SK-N-SH (cell line): ENCODE measurements at regions of chr5 and their contacts with region 1.

Region 1: DNA sequence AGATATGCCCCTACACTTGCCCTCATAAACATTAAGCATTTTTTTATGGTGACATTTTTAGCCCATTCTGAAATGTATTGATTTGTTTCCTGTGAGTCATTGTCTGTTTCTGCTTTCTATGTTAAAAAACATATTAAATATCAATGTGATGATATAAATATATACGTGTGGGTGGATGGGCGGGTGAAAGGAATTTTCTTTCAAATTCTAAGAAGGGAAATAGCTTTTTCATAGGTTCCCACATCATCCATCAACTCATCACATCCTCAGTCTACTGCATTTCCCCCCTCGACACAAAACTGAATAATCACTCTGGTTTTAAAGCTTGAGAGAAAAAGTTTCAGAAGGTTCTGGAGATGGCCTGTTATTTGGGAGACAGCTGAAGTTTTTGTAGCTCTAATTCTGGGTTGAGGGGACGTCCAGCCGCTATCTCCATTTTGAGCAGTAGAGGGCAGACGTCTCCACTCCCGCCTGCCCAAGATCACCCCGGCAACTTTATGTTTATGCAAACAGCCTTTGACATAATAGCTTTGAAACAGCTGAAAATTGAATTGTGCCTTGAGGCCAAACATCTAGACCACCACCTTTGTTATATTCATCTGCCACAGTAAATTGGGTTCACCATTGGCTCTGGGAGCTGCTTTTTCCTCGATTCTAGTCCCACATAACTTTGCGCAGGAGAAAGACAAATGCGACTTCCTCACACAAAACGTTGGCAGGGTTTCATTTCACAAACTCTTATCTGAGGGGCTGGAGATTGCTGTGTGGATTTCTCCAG is 216.2 kb upstream of the CLINT1 start:
- DNase-seq: peak; percentile 61
- H3K4me3 ChIP-seq: no peak overlapping the region; a peak in 1 of 4 replicates
- H3K27ac ChIP-seq: peak overlapping the region in 1 of 2 experiments; percentile 55; a peak in 1 of 4 replicates
- H3K4me1 ChIP-seq: peaks cover 0 to 3% of the 10 kb centered on the region in 2 experiments; a peak in 2 of 4 replicates
- H3K27me3 ChIP-seq: peaks cover 2% of the 10 kb centered on the region; the same call in 1 of the 2 replicates
- CTCF ChIP-seq: peak; percentile 89
- EP300 ChIP-seq: peak in 1 of 2 experiments; percentile 43; a peak in 1 of 4 replicates
- RAD21 ChIP-seq: peak; percentile 83

Region 2: DNA sequence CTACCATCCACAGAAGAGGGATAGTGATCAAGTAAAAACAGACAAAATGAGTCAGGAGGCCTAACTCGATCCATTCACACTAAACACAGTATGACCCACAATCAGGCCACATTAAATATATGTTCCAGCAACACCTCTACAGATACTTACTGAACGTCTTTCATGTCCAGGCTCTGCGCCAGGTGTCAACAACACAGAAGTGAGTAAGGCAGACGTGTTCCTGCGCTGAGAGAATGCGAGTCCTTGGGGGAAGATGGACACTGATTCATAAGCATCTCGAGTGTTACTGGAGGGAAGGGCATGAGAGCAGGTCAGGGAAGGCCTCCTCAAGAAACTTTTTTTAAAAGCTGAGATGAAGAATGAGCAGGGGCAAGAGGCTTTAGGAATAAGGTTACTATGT is 51.9 kb before region 1 on chr5:
- CTCF ChIA-PET with region 1: no interaction called
- POLR2A ChIA-PET with region 1: no interaction called
- DNase-seq: no peak
- H3K4me3 ChIP-seq: no peak overlapping the region
- H3K27ac ChIP-seq: no peak overlapping the region
- H3K4me1 ChIP-seq: no peaks in the 10 kb centered on the region
- H3K27me3 ChIP-seq: no peaks in the 10 kb centered on the region
- CTCF ChIP-seq: no peak
- EP300 ChIP-seq: no peak
- RAD21 ChIP-seq: no peak

Region 3: GRCh38 chr5:158054223-158055110 is 20.7 kb before region 1 on chr5:
- CTCF ChIA-PET with region 1: interaction called, 25 read pairs
- POLR2A ChIA-PET with region 1: no interaction called
- DNase-seq: peak; percentile 14
- H3K4me3 ChIP-seq: no peak overlapping the region
- H3K27ac ChIP-seq: peak overlapping the region; percentile 34 to 53; a peak in 3 of 4 replicates
- H3K4me1 ChIP-seq: peaks cover 4 to 12% of the 10 kb centered on the region in 2 experiments; a peak in 2 of 4 replicates
- H3K27me3 ChIP-seq: no peaks in the 10 kb centered on the region
- CTCF ChIP-seq: no peak
- EP300 ChIP-seq: peak; percentile 76 to 85
- RAD21 ChIP-seq: no peak

Region 4: GRCh38 chr5:158064334-158065123 is 10.7 kb before region 1 on chr5:
- CTCF ChIA-PET with region 1: interaction called, 25 read pairs
- POLR2A ChIA-PET with region 1: no interaction called
- DNase-seq: no peak
- H3K4me3 ChIP-seq: no peak overlapping the region
- H3K27ac ChIP-seq: peak overlapping the region in 1 of 2 experiments; percentile 53; a peak in 1 of 4 replicates
- H3K4me1 ChIP-seq: peaks cover 0 to 3% of the 10 kb centered on the region in 2 experiments; a peak in 2 of 4 replicates
- H3K27me3 ChIP-seq: no peaks in the 10 kb centered on the region
- CTCF ChIP-seq: no peak
- EP300 ChIP-seq: no peak
- RAD21 ChIP-seq: no peak

Region 5: GRCh38 chr5:158165638-158166037 is 90.5 kb after region 1 on chr5:
- CTCF ChIA-PET with region 1: interaction called, 28 read pairs
- POLR2A ChIA-PET with region 1: no interaction called
- DNase-seq: no peak
- H3K4me3 ChIP-seq: no peak overlapping the region
- H3K27ac ChIP-seq: no peak overlapping the region
- H3K4me1 ChIP-seq: peaks cover 0 to 17% of the 10 kb centered on the region in 2 experiments; a peak in 2 of 4 replicates
- H3K27me3 ChIP-seq: no peaks in the 10 kb centered on the region
- CTCF ChIP-seq: 0 out of 2 replicates have a peak, but pooled peaks have one; percentile 10
- EP300 ChIP-seq: no peak
- RAD21 ChIP-seq: peak; percentile 20; the same call in 1 of the 2 replicates

Region 6: GRCh38 chr5:159133041-159133741 is 1058.0 kb after region 1 on chr5:
- CTCF ChIA-PET with region 1: interaction called, 10 read pairs
- POLR2A ChIA-PET with region 1: no interaction called
- DNase-seq: peak; percentile 32
- H3K4me3 ChIP-seq: no peak overlapping the region; a peak in 1 of 4 replicates
- H3K27ac ChIP-seq: no peak overlapping the region
- H3K4me1 ChIP-seq: no peaks in the 10 kb centered on the region; a peak in 2 of 4 replicates
- H3K27me3 ChIP-seq: no peaks in the 10 kb centered on the region; the same call in 1 of the 2 replicates
- CTCF ChIP-seq: peak; percentile 84
- EP300 ChIP-seq: no peak
- RAD21 ChIP-seq: peak; percentile 89